Right cardiac atrium (tissue), 5 donors: ENCODE measurements at regions of chr1 and their contacts with region 1.

Region 1: GRCh38 chr1:39410915-39411436 is 80.5 kb upstream of the BMP8A start:
- DNase-seq: peak; percentile 83 to 92 (median 88)
- ATAC-seq: peak; percentile 4
- H3K4me3 ChIP-seq: peak overlapping the region; percentile 80
- H3K27ac ChIP-seq: peak overlapping the region; percentile 74
- H3K4me1 ChIP-seq: peaks cover 12% of the 10 kb centered on the region
- H3K27me3 ChIP-seq: no peaks in the 10 kb centered on the region

Region 2: DNA sequence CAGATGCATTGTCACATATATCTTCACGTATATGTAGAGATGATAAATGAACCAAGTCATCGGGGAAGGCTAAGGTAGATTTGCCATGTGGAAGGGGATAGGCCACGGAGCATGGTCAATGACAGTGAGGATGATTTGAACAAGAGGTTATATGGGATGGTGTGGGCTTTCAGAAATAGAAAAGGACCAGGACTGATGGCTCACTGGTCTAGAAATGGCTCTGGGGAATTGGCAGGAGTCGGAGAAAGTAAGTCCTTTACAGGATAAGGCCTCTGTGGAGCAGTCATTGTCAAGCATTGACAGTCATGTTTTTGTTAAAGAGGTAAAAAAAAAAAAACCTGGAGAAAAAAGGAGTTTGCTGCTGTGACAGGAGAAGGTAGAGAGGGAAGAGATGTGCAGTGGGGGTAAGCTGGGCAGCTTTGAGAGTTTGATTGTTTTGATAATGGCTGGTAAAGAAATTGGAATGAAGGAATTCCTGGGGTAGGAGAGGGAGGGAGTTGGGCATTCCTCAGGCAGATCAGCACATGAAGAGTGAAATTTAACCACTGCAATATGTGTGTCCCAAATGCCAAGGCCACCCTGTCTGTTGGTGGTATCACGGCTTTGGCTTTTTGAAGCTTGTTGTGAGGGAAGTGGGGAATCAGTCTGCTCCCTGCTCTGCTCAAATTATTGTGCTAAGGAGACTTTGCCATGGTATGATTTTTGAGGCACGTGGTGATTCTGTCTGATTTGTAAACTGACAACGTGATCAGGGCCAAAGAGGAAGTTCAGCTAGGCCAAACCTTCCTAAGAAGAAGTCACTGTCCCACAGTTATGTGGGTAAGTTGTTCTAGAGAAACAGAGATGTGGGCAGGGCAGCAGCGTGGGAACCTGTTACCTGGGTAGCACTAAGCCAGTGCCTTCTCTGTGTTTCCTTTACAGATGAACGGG is 180.4 kb before region 1 on chr1:
- intact Hi-C with region 1: no loop called
- DNase-seq: no peak
- ATAC-seq: peak; percentile 32 to 62
- H3K4me3 ChIP-seq: no peak overlapping the region
- H3K27ac ChIP-seq: no peak overlapping the region
- H3K4me1 ChIP-seq: peaks cover 17% of the 10 kb centered on the region
- H3K27me3 ChIP-seq: no peaks in the 10 kb centered on the region

Region 3: GRCh38 chr1:39317910-39318633 is 92.9 kb before region 1 on chr1:
- intact Hi-C with region 1: no loop called
- DNase-seq: peak in 2 of 3 donors; percentile 34 to 59
- ATAC-seq: peak; percentile 84 to 95
- H3K4me3 ChIP-seq: no peak overlapping the region
- H3K27ac ChIP-seq: no peak overlapping the region
- H3K4me1 ChIP-seq: peaks cover 1% of the 10 kb centered on the region
- H3K27me3 ChIP-seq: no peaks in the 10 kb centered on the region

Region 4: DNA sequence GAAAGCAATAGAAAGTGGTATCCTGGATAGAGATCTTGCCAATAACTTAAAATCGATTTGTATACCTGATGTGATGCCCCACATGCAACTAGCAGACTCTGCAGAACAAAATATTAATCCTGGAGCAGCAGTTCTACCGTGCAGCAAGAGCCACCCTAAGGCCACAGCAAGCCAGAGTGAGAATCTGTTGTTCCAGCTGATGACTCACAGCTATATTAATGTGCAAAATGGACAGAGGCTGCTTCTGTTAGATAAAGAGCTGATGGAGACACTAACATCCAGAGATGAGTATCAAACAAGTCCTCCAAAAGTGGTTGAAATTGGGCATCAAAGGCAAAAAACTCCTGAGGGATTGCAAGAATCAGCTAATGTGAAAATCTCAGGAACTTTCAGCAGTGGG is 78.7 kb before region 1 on chr1:
- intact Hi-C with region 1: no loop called
- DNase-seq: no peak
- ATAC-seq: no peak
- H3K4me3 ChIP-seq: no peak overlapping the region
- H3K27ac ChIP-seq: no peak overlapping the region
- H3K4me1 ChIP-seq: no peaks in the 10 kb centered on the region
- H3K27me3 ChIP-seq: no peaks in the 10 kb centered on the region

Region 5: DNA sequence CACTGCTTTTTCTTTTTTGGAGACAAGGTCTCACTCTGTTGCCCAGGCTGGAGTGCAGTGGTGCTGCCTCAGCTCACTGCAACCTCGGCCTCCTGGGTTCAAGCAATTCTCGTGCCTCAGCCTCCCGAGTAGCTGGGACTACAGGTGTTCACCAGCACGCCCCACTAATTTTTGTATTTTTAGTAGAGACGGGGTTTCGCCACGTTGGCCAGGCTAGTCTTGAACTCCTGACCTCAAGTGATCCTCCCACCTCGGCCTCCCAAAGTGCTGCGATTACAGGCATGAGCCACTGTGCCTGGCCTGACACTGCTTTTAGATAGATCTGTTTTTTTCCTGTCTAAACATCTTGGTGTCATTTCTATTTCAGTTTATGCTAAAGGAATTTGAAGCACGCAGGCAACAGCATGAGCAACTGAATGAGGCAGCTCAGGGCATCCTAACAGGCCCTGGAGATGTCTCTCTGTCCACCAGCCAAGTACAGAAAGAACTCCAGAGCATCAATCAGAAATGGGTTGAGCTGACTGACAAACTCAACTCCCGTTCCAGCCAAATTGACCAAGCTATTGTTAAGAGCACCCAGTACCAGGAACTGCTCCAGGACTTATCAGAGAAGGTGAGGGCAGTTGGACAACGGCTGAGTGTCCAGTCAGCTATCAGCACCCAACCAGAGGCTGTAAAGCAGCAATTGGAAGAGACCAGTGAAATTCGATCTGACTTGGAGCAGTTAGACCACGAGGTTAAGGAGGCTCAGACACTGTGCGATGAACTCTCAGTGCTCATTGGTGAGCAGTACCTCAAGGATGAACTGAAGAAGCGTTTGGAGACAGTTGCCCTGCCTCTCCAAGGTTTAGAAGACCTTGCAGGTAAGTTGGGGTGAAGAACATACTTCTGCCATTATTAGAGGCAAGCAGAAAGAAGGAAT is 25.6 kb before region 1 on chr1:
- intact Hi-C with region 1: loop called in 1 of 4 experiments (anchors 2 kb)
- DNase-seq: peak in 1 of 3 donors; percentile 61
- ATAC-seq: peak; percentile 72 to 89
- H3K4me3 ChIP-seq: no peak overlapping the region
- H3K27ac ChIP-seq: peak overlapping the region; percentile 95
- H3K4me1 ChIP-seq: peaks cover 4% of the 10 kb centered on the region
- H3K27me3 ChIP-seq: no peaks in the 10 kb centered on the region

Region 6: DNA sequence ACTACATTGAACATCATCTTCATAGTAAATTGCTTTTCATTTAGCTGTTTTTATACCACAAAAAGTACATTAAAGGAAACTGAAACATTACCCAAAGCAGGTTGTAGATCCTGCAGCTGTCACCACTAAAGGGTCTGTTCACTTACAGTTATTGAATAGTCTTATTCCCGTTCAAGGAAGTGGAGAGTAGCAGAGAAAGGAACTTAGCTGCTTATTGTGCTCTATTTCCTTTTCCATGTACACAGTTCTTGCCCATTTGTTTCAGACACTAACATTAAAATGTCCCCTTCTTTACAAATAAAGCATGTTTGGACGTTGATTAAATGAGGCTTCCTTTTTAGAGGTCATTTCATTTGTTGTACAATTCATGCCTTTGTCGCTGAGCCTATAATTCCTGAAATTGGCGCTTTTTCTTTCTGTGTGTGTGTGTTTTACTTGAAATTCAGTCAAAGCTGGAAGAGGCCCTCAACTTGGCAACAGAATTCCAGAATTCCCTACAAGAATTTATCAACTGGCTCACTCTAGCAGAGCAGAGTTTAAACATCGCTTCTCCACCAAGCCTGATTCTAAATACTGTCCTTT is 36.1 kb after region 1 on chr1:
- intact Hi-C with region 1: no loop called
- DNase-seq: no peak
- ATAC-seq: no peak
- H3K4me3 ChIP-seq: no peak overlapping the region
- H3K27ac ChIP-seq: no peak overlapping the region
- H3K4me1 ChIP-seq: no peaks in the 10 kb centered on the region
- H3K27me3 ChIP-seq: no peaks in the 10 kb centered on the region